Activated CD4-positive, alpha-beta T cell treated with anti-CD3 and anti-CD28 coated beads for 36 hours (primary cell): ENCODE measurements at regions of chr10 and their contacts with region 1.

Region 1: GRCh38 chr10:125719146-125720001 is at the start of gene EDRF1:
- DNase-seq: peak; percentile 99
- ATAC-seq: peak; percentile 97
- H3K4me3 Mint-ChIP-seq: peak within 1 kb of the TSS; percentile 82
- H3K27ac Mint-ChIP-seq: peak within 1 kb of the TSS; percentile 92
- H3K4me1 Mint-ChIP-seq: peaks cover 26% of the 10 kb centered on the region
- H3K27me3 Mint-ChIP-seq: no peaks in the 10 kb centered on the region
- total RNA-seq, gene EDRF1: 29.6 to 30.8 TPM

Region 2: GRCh38 chr10:125629763-125630376 is 89.5 kb before region 1 on chr10:
- CTCF ChIA-PET with region 1: no interaction called
- POLR2A ChIA-PET with region 1: no interaction called
- intact Hi-C with region 1: no loop called
- DNase-seq: no peak
- ATAC-seq: no peak
- H3K4me3 Mint-ChIP-seq: no peak overlapping the region
- H3K27ac Mint-ChIP-seq: no peak overlapping the region
- H3K4me1 Mint-ChIP-seq: no peaks in the 10 kb centered on the region
- H3K27me3 Mint-ChIP-seq: peaks cover 9% of the 10 kb centered on the region

Region 3: GRCh38 chr10:125822878-125823662 is 103.7 kb after region 1 on chr10 and contains the starts of genes BCCIP and UROS:
- CTCF ChIA-PET with region 1: no interaction called
- POLR2A ChIA-PET with region 1: interaction called, 3 read pairs
- intact Hi-C with region 1: loop called (anchors 1 kb)
- DNase-seq: peak; percentile 94
- ATAC-seq: peak; percentile 87
- H3K4me3 Mint-ChIP-seq: peak within 1 kb of the TSS; percentile 68
- H3K27ac Mint-ChIP-seq: peak within 1 kb of the TSS; percentile 27
- H3K4me1 Mint-ChIP-seq: peaks cover 42% of the 10 kb centered on the region
- H3K27me3 Mint-ChIP-seq: no peaks in the 10 kb centered on the region
- total RNA-seq, gene BCCIP: 106 to 115 TPM
- total RNA-seq, gene UROS: 37.3 to 39.6 TPM

Region 4: DNA sequence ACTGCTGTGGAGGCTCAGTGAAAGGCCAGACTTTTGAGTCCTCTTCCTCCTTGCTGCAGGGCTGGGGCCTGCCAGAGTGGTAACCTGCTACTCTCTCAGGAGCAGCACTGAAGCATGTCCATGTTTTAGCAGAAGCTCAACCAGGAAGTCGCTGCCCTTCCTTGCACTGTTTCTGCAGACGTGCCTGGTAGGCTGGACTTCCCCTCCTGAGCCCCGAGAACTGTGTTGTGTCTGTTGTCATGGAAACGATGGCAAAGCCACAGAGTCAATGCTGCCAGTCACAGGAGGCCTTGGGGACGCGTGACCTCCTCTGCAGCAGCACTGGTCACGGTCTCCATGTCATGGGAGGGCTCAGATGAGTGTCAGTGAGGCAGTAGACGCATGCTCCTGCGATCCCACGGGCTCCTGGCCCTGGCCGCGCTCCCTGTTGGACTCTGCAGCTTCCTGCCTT is 322.4 kb after region 1 on chr10:
- CTCF ChIA-PET with region 1: no interaction called
- POLR2A ChIA-PET with region 1: no interaction called
- intact Hi-C with region 1: loop called in 1 of 2 experiments (anchors 5 kb)
- DNase-seq: peak; percentile 86
- ATAC-seq: peak; percentile 98
- H3K4me3 Mint-ChIP-seq: no peak overlapping the region
- H3K27ac Mint-ChIP-seq: peak overlapping the region; percentile 79
- H3K4me1 Mint-ChIP-seq: peaks cover 16% of the 10 kb centered on the region
- H3K27me3 Mint-ChIP-seq: no peaks in the 10 kb centered on the region